Motor neuron (in vitro differentiated cells): ENCODE measurements at regions of chr15 and their contacts with region 1.

Region 1: DNA sequence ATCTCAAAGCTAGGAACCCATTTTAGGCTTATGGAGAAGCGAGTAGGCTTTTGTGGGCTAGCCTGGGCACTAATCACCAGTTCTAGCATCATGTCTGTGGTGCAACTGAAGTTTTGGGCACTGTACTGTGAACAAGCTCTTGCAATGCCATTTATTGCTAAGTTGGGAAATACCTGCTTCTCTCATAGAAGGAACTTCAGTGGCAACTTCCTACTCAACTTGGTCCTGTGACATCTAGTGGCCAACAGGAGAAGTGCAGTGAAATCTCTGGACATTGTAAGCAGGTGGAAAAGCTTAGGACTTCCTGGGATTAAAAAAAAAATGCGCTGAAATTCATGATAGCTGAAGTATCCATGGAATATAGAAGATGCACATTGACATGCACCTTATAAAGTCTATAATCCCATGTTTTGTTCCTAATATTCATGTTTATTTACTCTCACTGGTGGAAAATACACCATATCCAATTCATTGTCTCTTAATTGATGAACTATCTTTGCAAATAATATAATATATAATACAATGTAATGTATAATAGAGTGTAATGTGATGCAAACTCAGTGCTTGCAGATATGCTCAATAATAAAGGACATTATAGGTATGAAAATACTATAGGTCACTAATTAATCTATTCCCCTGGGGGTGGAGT is 6.5 kb upstream of the ALDH1A3 start:
- ATAC-seq: peak in 4 of 8 experiments; percentile 38 to 87 (median 78)
- H3K4me3 ChIP-seq: no peak overlapping the region
- H3K27ac ChIP-seq: no peak overlapping the region
- H3K4me1 ChIP-seq: no peaks in the 10 kb centered on the region

Region 2: DNA sequence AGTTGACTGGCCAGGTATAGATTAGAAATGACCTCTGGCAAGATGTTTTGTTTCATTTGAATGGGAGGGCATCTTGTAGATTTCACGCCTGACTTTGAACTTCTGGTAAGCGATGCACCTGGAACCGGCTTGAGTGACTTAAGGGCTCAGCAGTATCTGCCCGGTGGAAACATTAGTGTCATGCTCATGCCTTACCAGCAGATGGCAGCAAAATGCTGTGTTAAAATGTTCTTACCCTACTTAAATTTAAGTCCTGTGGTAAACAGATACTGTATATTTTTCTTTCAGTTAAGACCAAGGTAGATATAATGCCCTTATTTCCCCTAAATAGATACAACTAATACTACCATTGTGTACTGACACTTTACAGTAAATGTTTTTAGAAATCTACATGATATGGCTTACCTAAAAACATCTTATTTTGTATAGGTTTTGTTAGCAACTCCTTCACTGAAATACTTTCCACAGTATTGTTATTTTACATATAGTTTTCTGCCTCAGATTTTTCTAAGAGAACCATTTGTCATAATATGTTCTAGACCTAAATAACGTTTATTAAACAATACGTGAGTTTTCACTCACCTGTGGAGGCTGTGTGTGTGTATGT is 245.3 kb before region 1 on chr15:
- in situ Hi-C with region 1: loop called in 2 of 9 experiments (anchors 10 to 25 kb)
- ATAC-seq: peak; percentile 59 to 83 (median 68)
- H3K4me3 ChIP-seq: no peak overlapping the region
- H3K27ac ChIP-seq: no peak overlapping the region
- H3K4me1 ChIP-seq: no peaks in the 10 kb centered on the region